Dorsolateral prefrontal cortex (tissue), 120 donors: ENCODE measurements at regions of chr12 and their contacts with region 1.

Region 1: GRCh38 chr12:128316973-128317526 is 50.1 kb downstream of the TMEM132C start:
- DNase-seq: no peak
- H3K4me3 ChIP-seq: no peak overlapping the region
- H3K27ac ChIP-seq: peak overlapping the region in 12 of 59 donors; percentile 1 to 82 (median 46)
- H3K27me3 ChIP-seq: peaks cover 0 to 8% (median 0%) of the 10 kb centered on the region in 45 donors
- CTCF ChIP-seq: no peak

Region 2: DNA sequence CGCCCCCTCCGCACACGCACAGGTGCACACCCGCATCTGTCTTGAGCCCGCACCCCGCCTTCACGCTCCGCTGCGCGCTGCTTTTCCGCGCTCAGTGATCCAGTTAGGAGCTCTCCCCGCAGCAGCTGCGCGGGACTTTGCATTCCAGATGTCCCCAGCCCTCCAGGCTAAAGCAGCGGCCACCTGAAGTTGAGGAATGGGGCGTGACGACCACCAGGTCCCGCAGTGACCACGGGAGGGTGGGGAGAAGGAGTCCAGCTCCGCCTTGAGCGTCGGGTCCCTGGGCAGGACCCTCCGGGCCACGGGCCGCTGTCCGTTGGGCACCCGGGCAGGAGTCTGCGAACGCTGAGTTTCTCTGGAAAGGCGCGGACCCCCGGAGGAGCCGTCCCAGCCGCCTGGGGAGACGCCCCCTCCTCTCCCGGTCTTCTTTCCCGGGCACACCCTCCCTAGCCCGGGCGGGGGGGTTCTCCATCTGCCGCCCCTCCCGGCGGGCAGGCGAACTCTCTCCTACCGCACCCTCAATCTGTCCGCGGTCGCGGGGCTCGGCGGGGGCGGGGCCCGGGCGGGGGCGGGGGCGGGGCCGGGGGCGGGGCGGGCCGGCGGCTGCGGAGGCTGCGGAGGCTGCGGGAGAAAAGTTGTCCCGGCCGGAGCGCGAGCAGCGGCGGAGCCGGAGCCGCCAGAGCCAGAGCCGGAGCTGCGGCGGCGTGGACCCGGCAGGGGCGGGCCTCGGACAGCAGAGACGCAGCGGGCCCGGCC is 50.3 kb before region 1 on chr12 and contains the start of gene TMEM132C:
- intact Hi-C with region 1: loop called in 1 of 2 experiments (anchors 5 kb)
- DNase-seq: peak in 1 of 10 donors; percentile 23
- H3K4me3 ChIP-seq: peak within 1 kb of the TSS; percentile 49 to 80 (median 65)
- H3K27ac ChIP-seq: peak within 1 kb of the TSS in 35 of 59 donors; percentile 5 to 75 (median 52)
- H3K27me3 ChIP-seq: peaks cover 0 to 18% (median 3%) of the 10 kb centered on the region in 45 donors
- CTCF ChIP-seq: no peak
- total RNA-seq, gene TMEM132C: 9.2 to 19.8 (median 13.9) TPM

Region 3: DNA sequence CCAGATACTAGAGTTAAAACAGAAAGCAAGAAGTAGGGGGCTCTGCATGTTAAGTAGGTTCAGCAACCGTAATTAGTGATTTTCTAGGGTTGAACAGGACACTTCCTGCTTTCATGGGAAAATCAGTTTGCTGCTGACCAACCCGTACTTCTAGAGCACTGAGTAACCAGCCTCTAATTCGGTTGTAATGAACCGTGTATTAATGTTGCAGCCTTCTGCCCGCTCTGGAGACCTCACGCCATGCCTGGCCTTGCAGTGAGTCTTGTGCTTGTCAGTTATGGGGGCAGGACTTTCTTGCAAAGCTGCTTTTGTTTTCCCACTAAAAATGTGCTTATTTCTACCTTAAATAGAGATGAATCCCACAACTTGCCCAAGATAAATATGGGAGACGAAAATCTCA is 39.5 kb after region 1 on chr12:
- intact Hi-C with region 1: loop called in 1 of 2 experiments (anchors 2 kb)
- DNase-seq: no peak
- H3K4me3 ChIP-seq: peak overlapping the region in 1 of 59 donors; percentile 2
- H3K27ac ChIP-seq: no peak overlapping the region
- H3K27me3 ChIP-seq: peaks cover 0 to 8% (median 0%) of the 10 kb centered on the region in 45 donors
- CTCF ChIP-seq: no peak